GM23248 (cell line): ENCODE measurements at regions of chr18 and their contacts with region 1.

Region 1: DNA sequence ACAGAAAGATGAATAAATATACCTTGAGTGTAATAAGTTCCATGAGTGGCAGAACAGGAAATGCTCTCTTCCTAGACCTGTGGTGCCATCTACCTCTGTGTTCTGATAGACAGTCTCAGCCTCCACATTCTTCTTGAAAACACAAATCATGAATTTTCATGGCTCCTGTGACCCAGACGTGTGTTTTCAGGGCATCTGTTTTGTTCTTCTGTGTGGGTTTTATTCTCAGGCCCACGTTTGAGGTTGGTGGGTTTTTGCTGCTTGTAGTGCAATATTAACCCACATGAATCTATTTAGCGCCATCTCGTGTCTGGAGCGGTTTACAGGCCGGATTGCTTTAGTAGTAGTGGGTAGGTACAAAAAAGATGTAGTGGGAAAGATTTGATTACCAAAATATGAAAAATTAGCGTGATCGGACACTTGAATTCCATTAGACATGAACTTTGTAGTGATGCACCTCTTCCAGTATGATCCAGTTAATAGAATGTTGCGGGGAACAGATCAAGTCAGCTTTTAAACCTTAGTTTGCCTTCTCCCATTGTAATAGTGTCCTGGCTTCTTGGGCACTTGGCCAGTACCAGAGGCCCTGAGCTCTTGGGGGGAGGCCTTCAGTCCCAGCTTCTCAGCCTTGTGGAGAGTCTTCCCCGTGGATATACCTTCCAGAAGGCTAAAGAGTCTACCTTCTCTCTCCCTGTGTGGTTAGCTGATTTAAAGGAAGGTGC is 256.5 kb downstream of the TPGS2 start:
- DNase-seq: peak; percentile 76
- H3K4me3 ChIP-seq: peak overlapping the region; percentile 49
- H3K27ac ChIP-seq: no peak overlapping the region
- H3K4me1 ChIP-seq: peaks cover 7% of the 10 kb centered on the region; the same call in 1 of the 2 replicates
- H3K27me3 ChIP-seq: no peaks in the 10 kb centered on the region

Region 2: GRCh38 chr18:36309436-36310391 is 262.6 kb before region 1 on chr18:
- in situ Hi-C with region 1: loop called (anchors 10 kb)
- DNase-seq: peak; percentile 98
- H3K4me3 ChIP-seq: peak overlapping the region; percentile 27; the same call in 1 of the 2 replicates
- H3K27ac ChIP-seq: peak overlapping the region; percentile 97
- H3K4me1 ChIP-seq: peaks cover 56% of the 10 kb centered on the region
- H3K27me3 ChIP-seq: no peaks in the 10 kb centered on the region

Region 3: DNA sequence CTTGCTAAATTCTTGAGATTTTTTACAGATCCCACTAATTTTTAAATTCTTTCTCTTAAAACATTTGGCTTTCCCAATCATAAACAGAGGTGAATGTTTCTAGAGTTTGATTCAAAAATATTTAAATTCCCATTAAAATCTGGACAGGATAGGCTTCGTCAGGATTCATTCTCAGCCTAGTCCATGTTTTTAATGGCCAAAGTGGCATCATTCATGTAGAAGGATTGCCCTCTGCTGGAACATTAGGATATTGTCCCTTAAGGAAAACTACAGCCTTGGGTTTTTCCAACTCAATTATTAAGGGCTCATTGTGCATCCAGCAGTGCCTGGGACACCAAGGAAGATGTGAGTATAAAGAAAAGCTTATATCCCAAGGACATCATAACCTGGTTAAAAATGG is 184.8 kb after region 1 on chr18:
- in situ Hi-C with region 1: no loop called
- DNase-seq: peak; percentile 87
- H3K4me3 ChIP-seq: no peak overlapping the region
- H3K27ac ChIP-seq: peak overlapping the region; percentile 50
- H3K4me1 ChIP-seq: peaks cover 29% of the 10 kb centered on the region
- H3K27me3 ChIP-seq: no peaks in the 10 kb centered on the region